ENCODE measurements at regions of chr7 and their contacts with region 1.

Region 1: GRCh38 chr7:135634191-135634878 is 28.0 kb upstream of the STMP1 start:
- DNase-seq: no peak
- ATAC-seq: no peak
- H3K4me3 Mint-ChIP-seq: no peak overlapping the region
- H3K27ac Mint-ChIP-seq: no peak overlapping the region
- H3K4me1 Mint-ChIP-seq: no peaks in the 10 kb centered on the region
- H3K27me3 Mint-ChIP-seq: no peaks in the 10 kb centered on the region

Region 2: DNA sequence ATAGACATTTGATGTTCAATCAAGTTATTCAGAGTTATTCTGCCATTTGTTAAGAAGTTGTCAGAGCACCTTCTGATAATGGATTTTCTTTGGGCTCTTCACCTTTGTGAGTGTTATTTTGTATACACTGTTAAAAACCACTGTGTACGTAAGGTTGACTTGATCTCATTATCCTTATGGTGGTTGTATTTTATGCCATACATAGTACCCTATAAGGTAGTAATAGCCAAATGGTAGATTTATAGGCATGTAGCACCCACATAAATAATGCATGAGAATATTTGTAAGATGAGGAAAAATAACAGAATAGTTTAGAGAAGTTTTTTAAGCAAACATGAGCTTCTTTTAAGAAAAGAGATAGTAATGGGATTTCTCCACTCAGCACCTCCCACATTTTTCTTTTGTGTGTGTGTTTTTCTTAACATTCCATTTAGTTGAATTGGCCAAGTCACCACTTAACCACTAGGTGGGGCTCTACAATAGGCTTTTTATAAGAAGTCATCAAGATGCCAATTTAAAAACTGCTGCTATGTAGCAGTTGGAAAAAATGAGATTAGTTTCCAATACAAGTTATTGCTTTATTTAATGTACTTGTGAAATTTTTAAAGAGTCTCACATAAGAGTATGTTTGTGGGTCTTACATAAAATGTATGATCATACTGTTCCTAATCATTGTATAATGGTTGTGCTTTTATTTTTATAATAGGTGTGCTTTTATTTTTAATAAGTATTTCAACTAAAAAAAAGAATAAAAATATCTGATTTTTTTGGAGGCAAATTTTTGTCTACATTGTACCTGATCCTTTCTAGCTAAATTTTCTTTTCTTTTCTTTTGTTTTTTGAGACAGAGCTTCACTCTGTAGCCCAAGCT is 13.1 kb before region 1 on chr7:
- CTCF ChIA-PET with region 1: interaction called, 14 read pairs
- POLR2A ChIA-PET with region 1: no interaction called
- DNase-seq: peak; percentile 47
- ATAC-seq: no peak
- H3K4me3 Mint-ChIP-seq: no peak overlapping the region
- H3K27ac Mint-ChIP-seq: no peak overlapping the region
- H3K4me1 Mint-ChIP-seq: no peaks in the 10 kb centered on the region
- H3K27me3 Mint-ChIP-seq: no peaks in the 10 kb centered on the region